Common myeloid progenitor, CD34-positive (primary cell): ENCODE measurements at regions of chr5 and their contacts with region 1.

Region 1: DNA sequence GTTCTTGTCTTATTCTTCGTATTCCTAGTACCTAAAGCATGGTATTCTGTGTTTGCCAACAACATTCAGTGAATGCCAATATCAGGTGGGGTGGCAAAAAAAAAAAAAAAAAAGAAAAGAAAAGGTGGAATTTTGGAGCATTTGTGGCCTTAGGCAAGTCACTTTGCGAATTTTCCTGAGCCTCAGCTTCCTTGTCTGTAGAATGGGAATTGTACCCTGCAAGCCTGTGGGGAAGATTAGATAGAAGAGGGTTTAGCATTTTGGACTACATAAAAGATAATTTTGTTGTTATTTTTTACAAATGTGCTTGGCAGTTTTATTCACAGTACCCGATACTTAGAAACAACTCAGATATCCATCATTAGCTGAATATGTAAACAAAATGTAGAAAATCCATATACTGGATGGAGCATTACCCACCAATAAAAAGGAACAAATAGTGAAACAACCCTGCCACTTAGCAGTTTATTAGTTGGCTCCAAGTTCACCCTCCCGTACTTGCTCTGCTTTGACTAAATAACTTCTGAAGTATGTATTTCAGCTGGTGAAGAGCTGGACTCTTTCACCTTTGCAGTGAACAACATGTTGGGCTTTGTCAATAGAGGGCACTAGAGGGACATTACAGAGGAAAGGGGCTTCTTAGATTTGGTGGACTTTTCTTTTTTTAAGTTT is 13.6 kb downstream of the UBE2D2 start:
- DNase-seq: peak; percentile 57 to 78 (median 75)
- H3K4me3 ChIP-seq: no peak overlapping the region
- H3K27ac ChIP-seq: no peak overlapping the region
- H3K4me1 ChIP-seq: peaks cover 4 to 17% (median 10%) of the 10 kb centered on the region in 4 experiments
- H3K27me3 ChIP-seq: no peaks in the 10 kb centered on the region

Region 2: DNA sequence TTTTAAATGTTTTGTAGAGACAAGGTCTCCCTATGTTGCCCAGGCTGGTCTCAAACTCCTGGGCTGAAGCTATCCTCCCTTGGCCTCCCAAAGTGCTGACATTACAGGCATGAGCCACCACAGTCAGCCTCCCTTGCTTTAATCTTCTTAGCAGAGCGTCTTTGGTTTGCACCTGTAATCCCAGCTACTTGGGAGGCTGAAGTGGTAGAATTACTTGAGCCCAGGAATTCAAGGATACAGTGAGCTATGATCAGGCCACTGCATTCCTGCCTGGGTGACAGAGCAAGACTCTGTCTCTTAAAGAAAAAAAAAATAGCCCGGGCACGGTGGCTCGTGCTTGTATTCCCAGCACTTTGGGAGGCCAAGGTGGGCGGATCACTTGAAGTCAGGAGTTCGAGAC is 14.2 kb after region 1 on chr5:
- CTCF ChIA-PET with region 1: interaction called, 17 read pairs
- POLR2A ChIA-PET with region 1: interaction called, 3 read pairs
- DNase-seq: no peak
- H3K4me3 ChIP-seq: no peak overlapping the region
- H3K27ac ChIP-seq: no peak overlapping the region
- H3K4me1 ChIP-seq: peaks cover 0 to 5% (median 0%) of the 10 kb centered on the region in 4 experiments
- H3K27me3 ChIP-seq: no peaks in the 10 kb centered on the region